ENCODE measurements at regions of chr17 and their contacts with region 1.

Region 1: DNA sequence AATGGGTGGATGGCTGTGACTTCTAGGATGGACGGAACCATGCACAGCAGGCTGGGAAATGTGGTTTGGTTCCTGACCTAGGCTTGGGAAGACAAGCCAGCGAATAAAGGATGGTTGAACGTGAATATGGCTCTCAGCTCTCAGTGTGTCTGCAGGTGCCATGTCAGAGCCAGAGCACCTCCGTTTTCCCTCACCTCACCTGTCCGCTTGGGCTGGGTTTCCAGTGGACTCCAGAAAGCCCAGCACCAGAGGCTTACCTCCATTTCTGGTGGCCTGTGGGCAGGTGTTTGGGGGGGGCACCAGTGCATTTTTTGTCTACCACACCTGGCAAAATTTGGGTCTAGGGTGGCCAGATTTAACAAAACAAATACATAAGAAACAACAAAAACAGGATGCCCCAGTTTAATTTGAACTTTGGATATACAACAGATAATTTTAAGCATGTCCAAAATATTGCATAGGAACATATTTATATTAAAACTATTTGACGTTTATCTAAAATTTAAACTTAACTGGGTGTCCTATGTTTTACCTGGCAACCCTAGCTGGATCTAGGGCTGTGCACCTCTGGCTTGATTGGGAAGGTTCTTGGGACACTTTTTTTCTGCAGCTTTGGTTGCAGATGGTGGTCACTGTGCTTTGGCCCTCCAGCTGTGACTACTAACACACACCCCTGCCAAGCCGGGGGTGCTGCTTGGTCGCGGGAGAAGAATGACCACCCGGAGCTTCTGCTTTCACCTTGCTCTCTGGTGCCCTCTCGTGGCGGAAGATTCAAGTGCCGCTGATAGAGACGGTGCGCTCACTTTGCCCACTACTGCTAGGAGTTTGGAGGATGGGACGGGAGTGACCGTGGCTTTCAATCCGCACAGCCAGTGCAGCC is 6.3 kb downstream of the SPACA3 start:
- DNase-seq: peak; percentile 87
- H3K4me3 ChIP-seq: no peak overlapping the region
- H3K27ac ChIP-seq: no peak overlapping the region
- H3K4me1 ChIP-seq: peaks cover 0 to 12% (median 4%) of the 10 kb centered on the region in 4 donors
- H3K27me3 ChIP-seq: peaks cover 10% of the 10 kb centered on the region
- CTCF ChIP-seq: peak; percentile 84 to 93 (median 90)
- EP300 ChIP-seq: no peak
- POLR2A ChIP-seq: no peak

Region 2: DNA sequence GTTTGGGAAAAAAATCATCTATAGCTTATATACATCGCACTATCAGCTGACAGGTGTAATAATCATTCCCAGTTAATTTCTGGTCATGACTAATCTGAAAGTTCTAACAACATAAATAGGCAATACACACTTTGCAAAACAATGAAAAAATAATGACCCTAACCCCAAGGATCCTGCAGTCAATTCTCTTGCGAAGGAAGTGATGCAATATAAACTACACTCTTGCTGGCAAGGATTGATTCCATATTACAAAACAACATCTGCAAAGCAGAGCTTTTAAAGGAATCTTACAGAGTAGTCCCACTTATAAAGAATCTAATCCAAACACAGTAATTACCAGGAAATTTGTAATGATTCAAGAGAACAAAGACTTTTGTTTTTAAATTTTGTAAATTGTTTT is 194.4 kb before region 1 on chr17:
- in situ Hi-C with region 1: no loop called
- intact Hi-C with region 1: no loop called
- DNase-seq: no peak
- H3K4me3 ChIP-seq: no peak overlapping the region
- H3K27ac ChIP-seq: no peak overlapping the region
- H3K4me1 ChIP-seq: peaks cover 0 to 41% (median 18%) of the 10 kb centered on the region in 4 donors
- H3K27me3 ChIP-seq: no peaks in the 10 kb centered on the region
- CTCF ChIP-seq: no peak
- EP300 ChIP-seq: no peak
- POLR2A ChIP-seq: no peak

Region 3: DNA sequence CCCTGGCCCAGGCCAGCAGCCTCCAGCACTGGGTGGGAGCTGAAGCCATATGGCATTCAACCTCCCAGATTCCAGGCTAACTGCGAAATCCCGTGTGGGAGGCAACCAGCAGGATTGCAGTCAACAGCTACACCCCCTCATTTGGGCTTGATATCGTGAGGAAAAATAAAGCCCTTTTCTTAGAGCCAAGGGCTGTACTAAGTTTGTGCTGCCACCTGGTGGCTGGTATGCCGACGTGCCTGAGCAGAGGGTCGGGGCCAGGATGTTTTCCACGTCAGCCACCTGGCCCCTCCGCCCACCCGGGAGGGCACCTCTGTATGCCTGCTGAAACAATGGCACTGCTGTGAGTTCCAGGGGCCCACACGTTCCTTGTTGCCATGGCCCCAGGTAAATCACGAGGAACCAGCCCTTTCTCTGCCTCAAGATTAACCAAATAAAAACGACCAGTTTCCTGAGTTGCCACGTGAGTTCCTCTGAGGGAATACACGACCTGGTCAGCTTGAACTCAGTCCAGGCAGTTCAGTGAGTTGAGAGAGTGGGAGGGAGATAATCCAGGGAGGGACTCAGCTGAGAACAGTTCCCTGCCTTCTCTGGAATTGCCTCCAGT is 61.0 kb before region 1 on chr17:
- in situ Hi-C with region 1: loop called in 2 of 4 experiments (anchors 10 kb)
- intact Hi-C with region 1: no loop called
- DNase-seq: peak; percentile 78
- H3K4me3 ChIP-seq: no peak overlapping the region
- H3K27ac ChIP-seq: peak overlapping the region in 2 of 4 donors; percentile 28 to 37
- H3K4me1 ChIP-seq: peaks cover 0 to 8% (median 2%) of the 10 kb centered on the region in 4 donors
- H3K27me3 ChIP-seq: no peaks in the 10 kb centered on the region
- CTCF ChIP-seq: peak; percentile 83 to 91 (median 86)
- EP300 ChIP-seq: no peak
- POLR2A ChIP-seq: no peak

Region 4: DNA sequence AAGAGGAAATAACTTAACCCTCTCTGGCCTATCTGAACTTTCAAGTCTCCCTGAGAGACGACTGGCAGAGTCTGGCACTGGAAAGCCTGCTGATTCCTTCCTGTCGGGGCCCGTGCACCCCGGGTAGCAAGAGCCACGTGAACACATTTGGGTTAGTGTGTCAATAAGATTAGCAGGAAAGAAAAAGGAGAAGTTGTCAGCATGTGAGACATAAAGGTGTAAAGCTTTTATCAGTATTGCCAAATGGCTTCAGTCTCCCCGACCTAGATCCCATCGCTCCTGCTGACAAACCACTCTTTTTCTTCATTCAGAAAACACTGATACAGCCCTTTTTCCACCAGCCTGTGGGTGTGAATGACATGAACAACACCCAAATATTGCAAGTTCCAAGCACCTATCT is 1888.8 kb after region 1 on chr17:
- in situ Hi-C with region 1: no loop called
- intact Hi-C with region 1: loop called (anchors 10 kb)
- DNase-seq: no peak
- H3K4me3 ChIP-seq: no peak overlapping the region
- H3K27ac ChIP-seq: no peak overlapping the region
- H3K4me1 ChIP-seq: no peaks in the 10 kb centered on the region
- H3K27me3 ChIP-seq: peaks cover 34% of the 10 kb centered on the region
- CTCF ChIP-seq: no peak
- EP300 ChIP-seq: no peak
- POLR2A ChIP-seq: no peak

Measured in transverse colon (tissue), 4 donors.